Thyroid gland (tissue), 4 donors: ENCODE measurements at regions of chr1 and their contacts with region 1.

Region 1: DNA sequence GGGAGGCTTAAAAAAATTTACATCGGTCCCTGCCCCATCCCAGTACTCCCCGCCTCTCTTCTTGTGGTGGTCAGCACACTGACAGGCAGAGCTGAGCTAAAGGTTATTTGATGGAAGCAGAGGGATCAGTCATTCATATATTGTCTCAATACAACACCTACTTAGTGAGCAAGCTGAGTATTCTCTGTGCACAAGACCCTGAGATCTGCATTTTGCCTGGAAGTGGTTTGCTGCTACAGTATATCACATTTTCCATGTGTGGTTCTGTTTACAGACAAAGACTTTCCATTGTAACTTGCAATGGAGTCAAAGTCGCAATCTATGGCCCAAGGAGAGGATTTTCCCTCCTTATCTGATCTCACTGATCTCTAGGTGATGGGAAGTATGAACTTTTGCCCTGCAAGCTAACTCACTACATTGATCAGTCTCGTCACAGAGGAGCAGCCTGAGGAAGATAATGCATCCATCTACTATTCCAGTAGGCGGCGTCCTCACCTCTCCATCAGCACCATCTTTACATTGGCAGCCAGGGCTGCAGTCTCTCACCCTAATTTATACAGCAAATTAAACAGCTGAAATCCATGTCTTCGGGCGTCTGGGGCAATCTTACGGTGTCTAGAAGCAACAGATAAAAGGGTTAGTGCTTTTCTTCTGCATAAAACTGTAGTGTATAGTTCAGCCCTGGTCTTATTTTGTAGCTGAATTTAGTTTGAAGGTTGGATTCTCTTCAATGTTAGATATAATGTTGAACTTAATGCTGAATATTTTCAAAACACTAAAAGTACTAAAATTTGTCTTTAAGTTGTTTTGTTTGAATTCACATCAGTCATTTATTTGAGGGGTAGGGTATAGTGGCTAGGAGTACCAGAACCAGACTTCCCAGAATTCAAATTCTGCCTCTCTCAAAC is 3.2 kb upstream of the TRAF5 start:
- DNase-seq: peak; percentile 46 to 51
- H3K4me3 ChIP-seq: no peak overlapping the region
- H3K27ac ChIP-seq: no peak overlapping the region
- H3K4me1 ChIP-seq: no peaks in the 10 kb centered on the region
- H3K27me3 ChIP-seq: no peaks in the 10 kb centered on the region
- CTCF ChIP-seq: peak; percentile 31 to 79 (median 64)
- POLR2A ChIP-seq: no peak

Region 2: DNA sequence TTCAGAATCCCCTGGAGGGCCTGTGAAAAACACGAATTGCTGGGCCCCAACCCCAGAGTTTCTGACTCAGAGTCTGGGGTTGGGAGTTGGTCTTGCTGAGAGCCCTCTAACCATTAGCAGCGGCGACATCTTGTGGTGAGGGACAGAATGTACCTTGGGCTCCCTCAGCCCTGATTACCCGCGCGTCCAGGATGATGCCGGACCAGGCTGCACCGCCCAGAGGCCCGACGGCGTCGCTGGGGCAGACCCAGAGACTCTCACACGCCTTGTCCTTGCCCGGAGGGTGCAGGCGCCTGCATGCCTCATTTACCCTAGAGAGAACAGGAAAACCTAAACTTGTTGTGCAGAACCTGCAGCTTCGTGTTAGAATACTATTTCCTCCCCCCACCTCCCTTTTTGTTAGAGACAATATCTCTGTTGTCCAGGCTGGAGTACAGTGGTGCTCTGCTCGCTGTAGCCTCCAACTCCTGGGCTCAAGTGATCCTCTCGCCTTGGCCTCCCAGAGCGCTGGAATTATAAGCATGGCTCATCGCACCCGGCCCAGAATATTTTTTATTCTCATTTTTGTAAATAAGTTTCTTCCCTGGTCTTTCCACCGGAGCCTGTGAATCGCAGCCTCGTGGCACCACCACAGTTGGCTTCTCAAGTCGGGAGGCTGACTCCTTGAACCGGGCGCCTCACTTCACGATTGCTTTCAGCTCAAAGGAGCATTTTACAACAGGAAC is 190.8 kb after region 1 on chr1:
- intact Hi-C with region 1: loop called (anchors 10 kb)
- DNase-seq: peak; percentile 77 to 82
- H3K4me3 ChIP-seq: no peak overlapping the region
- H3K27ac ChIP-seq: no peak overlapping the region
- H3K4me1 ChIP-seq: peaks cover 0 to 4% of the 10 kb centered on the region in 2 donors
- H3K27me3 ChIP-seq: no peaks in the 10 kb centered on the region
- CTCF ChIP-seq: peak in 5 of 6 experiments; percentile 49 to 82 (median 66)
- POLR2A ChIP-seq: no peak